ACHN (cell line): ENCODE measurements at regions of chr12 and their contacts with region 1.

Region 1: GRCh38 chr12:68871921-68872320 is 61.0 kb downstream of the CPM start:
- DNase-seq: peak; percentile 60

Region 2: GRCh38 chr12:68221497-68221896 is 650.4 kb before region 1 on chr12:
- in situ Hi-C with region 1: no loop called
- DNase-seq: no peak

Region 3: DNA sequence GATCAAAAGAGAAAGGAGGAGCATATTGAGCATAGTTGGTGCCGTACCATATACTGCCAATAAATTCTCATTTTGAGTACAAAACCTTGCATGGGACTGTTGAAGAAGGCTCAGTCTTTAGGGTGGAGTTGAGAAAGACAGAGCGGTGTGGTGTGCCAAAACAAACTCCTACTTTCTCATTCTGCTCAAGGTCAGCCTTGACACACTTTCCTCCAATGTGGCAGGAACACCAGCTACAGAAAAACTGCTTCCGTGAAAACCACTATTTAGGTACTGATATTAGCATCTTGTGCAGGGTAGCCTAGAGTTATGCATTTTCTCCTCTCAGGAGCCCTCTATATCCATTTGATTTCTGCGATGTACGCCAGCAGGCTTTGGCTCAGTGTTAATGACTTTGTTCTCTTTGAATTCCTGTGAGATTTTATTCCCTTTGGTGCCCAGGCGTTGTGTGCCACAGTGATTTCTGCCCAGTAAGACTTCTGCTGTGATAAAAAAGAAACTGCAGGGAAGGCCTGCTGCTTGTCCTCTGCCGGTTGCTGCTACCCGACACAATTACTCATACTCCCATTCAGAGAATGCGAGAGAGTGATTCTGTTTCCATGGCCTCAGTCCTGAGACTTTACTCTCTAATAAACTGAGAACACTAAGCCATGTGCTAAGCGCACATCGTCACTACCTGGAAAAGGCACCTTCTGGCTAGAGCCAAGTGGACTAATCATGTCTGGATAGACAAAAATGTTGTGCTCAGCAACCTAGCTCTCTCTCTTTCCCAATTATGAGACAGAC is 451.5 kb before region 1 on chr12:
- in situ Hi-C with region 1: no loop called
- DNase-seq: no peak

Region 4: DNA sequence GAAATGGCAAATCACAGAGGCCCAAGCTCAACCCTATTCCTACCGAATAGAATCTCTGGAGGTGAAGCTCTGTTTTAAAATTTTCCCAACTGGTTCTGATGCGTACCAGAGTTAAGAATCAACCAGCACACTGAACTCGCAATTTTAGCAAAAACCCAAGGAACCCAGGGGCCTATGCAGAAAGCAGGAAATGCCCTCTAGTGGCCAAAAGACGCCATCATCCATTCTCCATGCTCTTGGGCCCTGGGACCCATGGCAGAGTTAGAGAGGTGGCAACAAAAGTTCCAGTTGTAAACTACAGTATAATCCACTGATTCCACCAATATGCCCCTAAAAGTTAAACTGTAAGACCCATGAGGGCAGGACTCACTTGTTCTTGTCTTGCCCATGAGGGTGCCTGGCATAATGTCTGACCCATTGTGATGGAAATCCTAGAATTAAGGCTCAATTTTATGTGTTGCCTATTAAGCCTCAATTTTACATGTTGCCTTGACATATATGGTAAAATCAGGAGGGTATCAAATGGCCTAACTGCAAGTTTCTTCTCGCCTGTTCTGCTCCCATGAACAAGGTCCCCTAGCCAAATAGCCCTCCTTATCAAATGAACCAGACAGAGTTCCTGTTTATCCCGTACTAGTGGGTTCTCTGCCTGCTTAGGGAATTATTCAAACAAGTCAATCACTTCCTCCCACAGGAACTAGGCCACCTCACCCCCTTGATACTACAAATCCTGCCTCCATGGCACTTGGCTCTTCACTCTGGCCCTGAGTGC is 198.6 kb after region 1 on chr12:
- in situ Hi-C with region 1: loop called (anchors 25 kb)
- DNase-seq: peak; percentile 83

Region 5: GRCh38 chr12:69083689-69084088 is 211.8 kb after region 1 on chr12:
- in situ Hi-C with region 1: no loop called
- DNase-seq: no peak

Region 6: DNA sequence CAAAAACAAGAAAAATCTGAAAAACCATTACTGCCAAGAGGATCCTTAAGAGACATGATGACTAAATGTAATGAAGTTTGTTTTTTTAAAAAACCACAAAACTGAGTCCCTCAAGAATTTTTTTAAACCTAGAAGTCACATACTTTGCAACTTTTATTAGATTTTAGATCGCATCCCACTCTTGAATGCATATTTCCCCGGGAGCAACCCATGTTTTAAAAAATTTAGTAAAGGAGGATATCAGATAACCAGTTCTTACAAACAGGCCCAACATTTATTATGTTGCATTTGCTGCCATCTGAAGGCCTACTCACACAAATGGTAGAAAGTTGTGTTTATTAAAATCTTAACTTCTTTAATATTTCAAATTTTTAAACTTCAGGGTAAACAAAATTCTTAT is 669.1 kb after region 1 on chr12:
- in situ Hi-C with region 1: no loop called
- DNase-seq: peak; percentile 20